Panc1 (cell line): ENCODE measurements at regions of chr20 and their contacts with region 1.

Region 1: GRCh38 chr20:40438161-40438840 is 250.7 kb downstream of the MAFB start:
- DNase-seq: no peak
- ATAC-seq: no peak
- H3K4me3 ChIP-seq: no peak overlapping the region
- H3K27ac ChIP-seq: no peak overlapping the region
- H3K4me1 ChIP-seq: no peaks in the 10 kb centered on the region
- H3K27me3 ChIP-seq: no peaks in the 10 kb centered on the region
- CTCF ChIP-seq: no peak

Region 2: GRCh38 chr20:38926142-38926933 is 1512.0 kb before region 1 on chr20 and contains the start of gene FAM83D:
- CTCF ChIA-PET with region 1: no interaction called
- POLR2A ChIA-PET with region 1: interaction called, 10 read pairs
- in situ Hi-C with region 1: no loop called
- intact Hi-C with region 1: no loop called
- DNase-seq: peak; percentile 92
- ATAC-seq: peak; percentile 97
- H3K4me3 ChIP-seq: peak within 1 kb of the TSS; percentile 81 to 85
- H3K27ac ChIP-seq: peak within 1 kb of the TSS; percentile 89
- H3K4me1 ChIP-seq: peaks cover 12% of the 10 kb centered on the region
- H3K27me3 ChIP-seq: no peaks in the 10 kb centered on the region
- CTCF ChIP-seq: no peak; the same call in none of the 2 replicates
- total RNA-seq, gene FAM83D: 30.9 TPM

Region 3: GRCh38 chr20:40323361-40323794 is 114.9 kb before region 1 on chr20:
- CTCF ChIA-PET with region 1: no interaction called
- POLR2A ChIA-PET with region 1: no interaction called
- in situ Hi-C with region 1: no loop called
- intact Hi-C with region 1: no loop called
- DNase-seq: no peak
- ATAC-seq: no peak
- H3K4me3 ChIP-seq: no peak overlapping the region
- H3K27ac ChIP-seq: no peak overlapping the region
- H3K4me1 ChIP-seq: no peaks in the 10 kb centered on the region
- H3K27me3 ChIP-seq: no peaks in the 10 kb centered on the region
- CTCF ChIP-seq: no peak

Region 4: DNA sequence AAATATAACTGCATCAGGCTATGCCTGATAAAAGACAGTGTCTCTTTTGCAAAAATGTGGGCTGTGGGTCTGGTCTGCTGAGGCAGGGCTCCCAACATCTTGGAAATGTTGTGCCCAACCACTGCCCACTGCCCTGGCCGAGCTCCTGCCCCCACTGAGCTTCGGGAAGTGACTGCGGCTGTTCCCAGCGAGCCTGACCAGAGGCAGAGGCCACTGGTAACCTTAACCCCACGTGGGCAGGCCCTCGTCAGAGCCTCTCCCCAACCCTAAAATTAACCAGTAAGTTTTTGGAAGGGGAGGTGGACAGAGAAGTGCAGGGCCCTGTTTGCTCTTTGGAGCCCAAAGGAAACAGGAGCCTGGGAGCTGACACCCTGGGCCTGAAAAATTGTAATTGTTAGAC is 24.9 kb after region 1 on chr20:
- CTCF ChIA-PET with region 1: no interaction called
- POLR2A ChIA-PET with region 1: no interaction called
- in situ Hi-C with region 1: no loop called
- intact Hi-C with region 1: no loop called
- DNase-seq: no peak
- ATAC-seq: no peak
- H3K4me3 ChIP-seq: no peak overlapping the region
- H3K27ac ChIP-seq: no peak overlapping the region
- H3K4me1 ChIP-seq: no peaks in the 10 kb centered on the region
- H3K27me3 ChIP-seq: no peaks in the 10 kb centered on the region
- CTCF ChIP-seq: no peak

Region 5: GRCh38 chr20:40551125-40551530 is 112.8 kb after region 1 on chr20:
- CTCF ChIA-PET with region 1: no interaction called
- POLR2A ChIA-PET with region 1: no interaction called
- in situ Hi-C with region 1: no loop called
- intact Hi-C with region 1: no loop called
- DNase-seq: no peak
- ATAC-seq: no peak
- H3K4me3 ChIP-seq: no peak overlapping the region
- H3K27ac ChIP-seq: no peak overlapping the region
- H3K4me1 ChIP-seq: no peaks in the 10 kb centered on the region
- H3K27me3 ChIP-seq: no peaks in the 10 kb centered on the region
- CTCF ChIP-seq: no peak

Region 6: GRCh38 chr20:40563296-40563944 is 125.1 kb after region 1 on chr20:
- CTCF ChIA-PET with region 1: no interaction called
- POLR2A ChIA-PET with region 1: no interaction called
- in situ Hi-C with region 1: no loop called
- intact Hi-C with region 1: no loop called
- DNase-seq: no peak
- ATAC-seq: no peak
- H3K4me3 ChIP-seq: no peak overlapping the region
- H3K27ac ChIP-seq: no peak overlapping the region
- H3K4me1 ChIP-seq: no peaks in the 10 kb centered on the region
- H3K27me3 ChIP-seq: no peaks in the 10 kb centered on the region
- CTCF ChIP-seq: no peak